ENCODE measurements at regions of chr5 and their contacts with region 1.

Region 1: GRCh38 chr5:134758504-134759341 is at the start of gene DDX46:
- DNase-seq: peak; percentile 98
- ATAC-seq: peak; percentile 99
- H3K4me3 Mint-ChIP-seq: peak within 1 kb of the TSS; percentile 94
- H3K27ac Mint-ChIP-seq: peak within 1 kb of the TSS; percentile 89
- H3K4me1 Mint-ChIP-seq: peaks cover 29% of the 10 kb centered on the region
- H3K27me3 Mint-ChIP-seq: no peaks in the 10 kb centered on the region
- total RNA-seq, gene DDX46: 63.5 to 86.7 TPM

Region 2: DNA sequence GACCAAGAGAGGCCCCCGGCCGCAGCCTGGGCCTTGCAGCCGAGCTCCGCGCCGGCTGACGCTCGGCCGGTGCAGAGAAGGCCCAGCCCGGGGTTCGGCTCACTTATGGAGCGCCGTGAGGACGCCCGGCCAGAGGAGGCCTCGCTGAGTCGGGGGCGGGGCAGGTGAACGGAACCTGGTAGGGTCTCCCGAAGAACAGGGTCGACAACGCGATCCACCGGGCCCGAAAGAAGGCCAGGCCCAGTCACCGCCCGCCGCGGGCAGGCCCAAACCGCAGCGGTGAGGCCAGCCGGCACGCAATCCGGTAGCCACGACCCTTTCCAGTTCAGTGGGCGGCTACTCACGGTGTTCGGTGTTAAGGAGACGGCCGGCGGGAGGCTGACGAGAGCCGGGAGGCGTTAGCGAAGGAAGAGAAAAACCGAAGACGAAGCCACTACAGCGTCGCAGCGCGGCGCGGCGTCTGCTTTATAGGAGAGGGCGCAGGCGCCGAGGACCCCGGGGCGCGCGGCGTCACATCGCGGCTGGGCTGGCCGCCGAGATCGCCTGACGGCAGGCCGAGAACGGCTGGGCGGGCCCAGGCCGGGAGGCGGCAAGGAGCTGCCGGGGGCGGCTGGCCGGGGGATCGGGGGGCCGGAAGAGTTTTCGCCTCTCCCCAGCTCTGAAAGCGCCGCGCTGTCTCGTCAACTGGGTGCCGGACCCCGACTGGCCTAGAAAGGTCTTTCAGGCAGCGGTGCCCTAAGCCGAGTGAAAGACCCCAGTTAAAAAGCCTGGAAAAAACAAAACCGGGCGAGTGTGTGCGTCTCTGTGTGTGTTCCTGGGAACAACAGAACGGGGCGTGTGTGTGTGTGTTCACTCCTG is 582.0 kb before region 1 on chr5 and contains the start of gene SKP1:
- CTCF ChIA-PET with region 1: no interaction called
- POLR2A ChIA-PET with region 1: no interaction called
- intact Hi-C with region 1: loop called in 1 of 2 experiments (anchors 2 kb)
- DNase-seq: peak; percentile 91
- ATAC-seq: peak; percentile 85
- H3K4me3 Mint-ChIP-seq: peak within 1 kb of the TSS; percentile 98
- H3K27ac Mint-ChIP-seq: peak within 1 kb of the TSS; percentile 95
- H3K4me1 Mint-ChIP-seq: peaks cover 32% of the 10 kb centered on the region
- H3K27me3 Mint-ChIP-seq: no peaks in the 10 kb centered on the region
- total RNA-seq, gene SKP1: 218 to 265 TPM

Region 3: GRCh38 chr5:134637161-134637582 is 121.6 kb before region 1 on chr5:
- CTCF ChIA-PET with region 1: no interaction called
- POLR2A ChIA-PET with region 1: no interaction called
- intact Hi-C with region 1: loop called (anchors 1 kb)
- DNase-seq: no peak
- ATAC-seq: no peak
- H3K4me3 Mint-ChIP-seq: no peak overlapping the region
- H3K27ac Mint-ChIP-seq: no peak overlapping the region
- H3K4me1 Mint-ChIP-seq: peaks cover 6% of the 10 kb centered on the region
- H3K27me3 Mint-ChIP-seq: no peaks in the 10 kb centered on the region

Region 4: DNA sequence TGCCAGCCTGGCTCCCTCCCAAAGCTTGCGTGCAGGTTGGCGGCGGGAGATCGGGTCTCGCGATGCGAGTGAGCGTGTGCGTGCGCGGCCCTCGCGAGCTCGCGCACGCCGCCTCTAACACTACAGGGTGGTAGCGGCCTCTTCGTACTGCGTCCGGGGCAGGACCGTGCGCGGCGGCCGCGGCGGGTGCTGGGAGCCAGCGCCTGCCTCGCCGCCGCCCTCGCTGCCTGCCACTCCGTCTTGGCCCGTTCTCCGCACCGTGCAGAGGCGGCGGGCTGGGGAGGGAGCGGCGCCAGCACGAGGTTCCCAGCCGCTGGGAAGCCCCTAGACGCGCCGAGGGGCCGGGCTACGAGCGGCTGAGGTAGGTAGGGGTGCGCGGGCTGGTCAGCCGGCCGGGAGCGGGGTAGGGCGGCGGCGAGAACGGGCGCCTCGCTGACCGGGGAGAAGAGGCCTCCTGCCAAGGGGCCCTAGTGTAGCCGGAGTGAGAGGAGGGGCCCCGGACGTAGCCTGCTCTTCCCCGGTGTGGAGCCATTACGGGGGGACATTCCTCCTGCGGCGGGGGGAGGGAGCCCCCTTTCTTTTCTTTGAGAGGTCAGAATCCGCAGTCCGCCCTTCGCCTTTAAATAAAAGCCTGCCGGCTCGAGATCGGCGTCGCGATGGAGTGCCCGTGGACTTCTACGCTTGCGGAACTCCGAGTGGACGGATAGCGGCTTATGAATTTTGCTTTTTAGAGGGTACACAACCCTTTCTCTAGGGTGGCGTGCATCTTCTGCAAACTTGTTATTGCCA is 87.3 kb after region 1 on chr5 and contains the start of gene C5orf24:
- CTCF ChIA-PET with region 1: interaction called, 3 read pairs
- POLR2A ChIA-PET with region 1: interaction called, 4 read pairs
- intact Hi-C with region 1: loop called (anchors 1 to 2 kb)
- DNase-seq: peak; percentile 96
- ATAC-seq: peak; percentile 95
- H3K4me3 Mint-ChIP-seq: peak within 1 kb of the TSS; percentile 95
- H3K27ac Mint-ChIP-seq: peak within 1 kb of the TSS; percentile 97
- H3K4me1 Mint-ChIP-seq: peaks cover 29% of the 10 kb centered on the region
- H3K27me3 Mint-ChIP-seq: no peaks in the 10 kb centered on the region
- total RNA-seq, gene C5orf24: 24.5 to 24.9 TPM

Region 5: GRCh38 chr5:134873987-134874830 is 115.5 kb after region 1 on chr5 and contains the start of gene TXNDC15:
- CTCF ChIA-PET with region 1: no interaction called
- POLR2A ChIA-PET with region 1: no interaction called
- intact Hi-C with region 1: loop called in 1 of 2 experiments (anchors 1 kb)
- DNase-seq: peak; percentile 90
- ATAC-seq: peak; percentile 83
- H3K4me3 Mint-ChIP-seq: peak within 1 kb of the TSS; percentile 88
- H3K27ac Mint-ChIP-seq: peak within 1 kb of the TSS; percentile 97
- H3K4me1 Mint-ChIP-seq: peaks cover 37% of the 10 kb centered on the region
- H3K27me3 Mint-ChIP-seq: no peaks in the 10 kb centered on the region
- total RNA-seq, gene TXNDC15: 16.6 to 29.1 TPM